AG04449 (cell line): ENCODE measurements at regions of chr2 and their contacts with region 1.

Region 1: DNA sequence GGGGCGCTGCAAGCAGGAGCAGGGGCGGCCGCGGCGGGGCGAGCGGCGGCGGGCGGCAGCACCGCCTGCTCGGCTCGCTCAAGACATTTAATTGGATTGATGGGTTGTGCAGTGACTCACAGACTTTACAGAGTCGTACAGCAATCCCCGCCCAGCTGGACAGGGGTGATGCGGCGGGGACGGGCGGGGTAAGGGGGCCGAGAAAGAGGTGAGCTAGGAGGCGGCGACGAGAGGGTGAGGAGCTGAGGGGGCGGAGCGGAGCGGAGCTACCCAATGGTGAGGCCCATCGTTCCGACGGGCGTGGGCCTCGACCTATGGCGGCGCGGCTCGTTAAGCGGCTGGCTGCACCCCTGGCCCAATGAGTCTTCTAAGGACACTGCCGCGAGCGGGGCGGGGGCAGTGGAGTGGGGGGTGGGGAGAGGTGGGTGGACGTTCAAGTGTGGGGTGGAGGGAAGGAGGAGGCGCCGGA is 97.1 kb upstream of the SERTAD2 start:
- DNase-seq: peak; percentile 97
- H3K4me3 ChIP-seq: peak overlapping the region; percentile 88
- CTCF ChIP-seq: peak; percentile 0

Region 2: GRCh38 chr2:64767670-64768468 is 17.0 kb after region 1 on chr2:
- CTCF ChIA-PET with region 1: interaction called, 31 read pairs
- POLR2A ChIA-PET with region 1: interaction called, 17 read pairs
- DNase-seq: peak; percentile 59
- H3K4me3 ChIP-seq: peak overlapping the region; percentile 63
- CTCF ChIP-seq: no peak

Region 3: DNA sequence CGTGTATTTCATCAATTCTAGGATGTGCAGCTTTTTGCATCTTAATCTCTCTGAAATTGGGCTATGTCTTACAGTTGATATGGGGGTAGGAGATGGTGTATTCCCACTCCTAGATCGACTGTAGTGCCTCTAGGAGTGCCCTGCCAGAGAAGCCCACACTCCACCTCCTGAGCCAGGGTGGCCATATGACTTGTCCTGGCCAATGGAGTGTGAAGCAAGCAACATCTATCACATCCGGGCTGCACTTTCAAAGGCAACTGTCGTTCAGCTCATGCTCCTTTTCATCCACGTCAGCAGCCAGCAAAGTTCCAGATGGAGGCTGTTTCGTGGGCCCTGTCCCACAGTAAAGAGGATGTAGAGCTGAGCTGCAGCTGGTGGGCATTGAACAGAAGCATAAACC is 89.0 kb after region 1 on chr2:
- CTCF ChIA-PET with region 1: interaction called, 7 read pairs
- POLR2A ChIA-PET with region 1: interaction called, 18 read pairs
- DNase-seq: no peak
- H3K4me3 ChIP-seq: no peak overlapping the region
- CTCF ChIP-seq: no peak

Region 4: DNA sequence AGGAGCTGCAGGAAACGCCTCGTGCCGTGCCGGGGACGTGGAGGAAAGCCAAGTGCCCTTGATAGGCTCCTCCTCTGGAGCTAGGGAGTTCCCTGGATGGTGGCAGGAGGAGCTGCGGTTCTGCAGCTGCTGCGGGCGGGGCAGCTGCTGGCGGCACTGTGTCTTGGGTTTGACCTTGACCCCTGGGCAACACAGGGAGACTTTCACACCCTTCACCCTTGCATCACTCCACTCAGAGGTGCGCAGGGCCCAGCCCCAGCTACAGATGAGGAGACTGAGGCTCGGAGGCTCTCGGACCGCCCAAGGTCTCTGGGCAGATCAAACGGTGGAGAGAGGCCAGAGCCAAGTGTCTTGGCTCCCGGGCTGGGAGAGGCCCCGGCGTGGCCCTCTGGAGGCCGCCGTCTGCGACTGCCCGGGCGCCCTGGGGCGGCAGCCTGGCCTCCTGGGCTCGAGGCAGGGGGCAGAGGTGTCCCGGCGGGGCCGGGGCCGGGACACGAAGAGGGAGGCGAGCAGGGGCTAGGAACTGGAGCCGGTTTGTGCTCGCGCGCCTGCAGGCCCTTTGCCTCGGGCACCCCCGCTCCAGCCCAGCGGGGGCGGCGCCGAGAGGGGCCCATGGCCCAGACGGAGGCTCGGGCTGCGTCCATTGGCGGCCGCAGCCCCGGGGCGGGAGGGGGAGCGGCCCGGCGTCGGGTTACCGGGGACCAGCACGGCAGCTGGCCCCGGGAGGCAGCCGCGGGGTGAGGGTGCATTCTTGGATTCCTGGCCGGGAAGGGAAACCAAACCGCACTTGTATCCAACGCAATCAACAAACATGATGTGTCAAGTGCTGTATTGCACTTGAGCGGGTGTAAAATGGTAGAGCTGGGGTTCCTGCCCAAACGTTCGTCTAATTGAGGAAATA is 108.7 kb after region 1 on chr2:
- CTCF ChIA-PET with region 1: interaction called, 17 read pairs
- POLR2A ChIA-PET with region 1: interaction called, 24 read pairs
- DNase-seq: peak; percentile 80
- H3K4me3 ChIP-seq: peak overlapping the region; percentile 42
- CTCF ChIP-seq: no peak

Region 5: GRCh38 chr2:64865073-64865830 is 114.4 kb after region 1 on chr2:
- CTCF ChIA-PET with region 1: interaction called, 17 read pairs
- POLR2A ChIA-PET with region 1: interaction called, 24 read pairs
- DNase-seq: no peak
- H3K4me3 ChIP-seq: peak overlapping the region; percentile 54
- CTCF ChIP-seq: peak; percentile 46